Activated T-helper 1 cell treated with anti-CD3 and anti-CD28 coated beads, Interleukin-12 subunit alpha, Interleukin-12 subunit beta, Interleukin-2, Interleukin-4 antibody, amounts not matched to agents 30 ng/mL and 10 ng/mL and 1 ng/mL, durations not matched to agents 14 hours and 24 hours and 36 hours (primary cell): ENCODE measurements at regions of chr16 and their contacts with region 1.

Region 1: DNA sequence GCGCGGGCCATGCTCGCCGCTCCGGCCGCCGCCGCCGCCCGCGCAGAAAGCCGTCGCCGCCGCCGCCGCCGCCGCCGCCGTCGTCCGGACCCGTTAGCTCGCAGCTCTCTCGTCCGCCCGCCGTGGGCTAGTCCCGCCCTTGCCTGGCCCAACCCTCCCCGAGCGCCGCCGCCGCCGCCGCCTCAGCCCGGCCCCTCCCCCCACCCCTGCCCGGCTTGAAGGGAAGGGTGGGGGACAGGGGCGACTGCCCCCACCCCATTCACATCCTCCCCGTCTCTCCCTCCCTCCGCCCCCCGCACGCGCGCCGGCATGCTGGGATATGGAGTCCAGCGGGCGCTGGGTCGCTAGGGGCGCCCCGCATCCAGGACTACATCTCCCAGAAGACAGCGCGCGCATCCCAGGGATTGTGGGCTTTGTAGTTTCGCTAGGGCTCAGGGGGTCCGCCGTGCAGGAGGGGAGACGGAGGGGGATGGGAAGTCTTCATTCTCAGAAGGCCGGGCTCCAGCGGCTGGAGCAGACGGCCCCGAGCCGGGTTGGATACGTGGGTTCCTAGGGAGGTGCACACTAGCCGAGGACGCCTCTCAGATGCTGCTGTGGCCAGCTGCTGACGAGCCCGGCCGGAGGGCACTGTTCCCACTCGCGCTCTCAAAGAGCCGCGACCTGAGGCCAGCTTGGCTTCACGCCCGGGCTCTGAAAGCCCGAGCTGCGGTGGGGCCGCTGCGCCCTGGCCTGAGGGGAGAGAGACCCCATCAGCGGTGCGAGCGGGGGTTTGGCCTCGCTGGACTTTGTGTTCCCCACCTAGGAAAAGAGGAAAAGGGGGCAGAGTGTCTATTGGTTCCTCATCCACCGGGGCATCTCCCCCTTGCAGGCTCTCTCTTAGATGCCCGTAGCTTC is at the start of gene ST3GAL2:
- DNase-seq: peak; percentile 92
- H3K4me3 Mint-ChIP-seq: peak within 1 kb of the TSS; percentile 98
- H3K27ac Mint-ChIP-seq: peak within 1 kb of the TSS; percentile 92
- H3K4me1 Mint-ChIP-seq: peaks cover 28% of the 10 kb centered on the region
- H3K27me3 Mint-ChIP-seq: no peaks in the 10 kb centered on the region
- total RNA-seq, gene ST3GAL2: 35.6 and 37.7 TPM in 2 replicates

Region 2: GRCh38 chr16:70251629-70252354 is 187.4 kb before region 1 on chr16 and contains the start of gene EXOSC6:
- intact Hi-C with region 1: loop called (anchors 5 kb)
- DNase-seq: peak; percentile 90
- H3K4me3 Mint-ChIP-seq: peak within 1 kb of the TSS; percentile 91
- H3K27ac Mint-ChIP-seq: peak within 1 kb of the TSS; percentile 96
- H3K4me1 Mint-ChIP-seq: peaks cover 10% of the 10 kb centered on the region
- H3K27me3 Mint-ChIP-seq: no peaks in the 10 kb centered on the region
- total RNA-seq, gene EXOSC6: 40.5 and 42.1 TPM in 2 replicates

Region 3: DNA sequence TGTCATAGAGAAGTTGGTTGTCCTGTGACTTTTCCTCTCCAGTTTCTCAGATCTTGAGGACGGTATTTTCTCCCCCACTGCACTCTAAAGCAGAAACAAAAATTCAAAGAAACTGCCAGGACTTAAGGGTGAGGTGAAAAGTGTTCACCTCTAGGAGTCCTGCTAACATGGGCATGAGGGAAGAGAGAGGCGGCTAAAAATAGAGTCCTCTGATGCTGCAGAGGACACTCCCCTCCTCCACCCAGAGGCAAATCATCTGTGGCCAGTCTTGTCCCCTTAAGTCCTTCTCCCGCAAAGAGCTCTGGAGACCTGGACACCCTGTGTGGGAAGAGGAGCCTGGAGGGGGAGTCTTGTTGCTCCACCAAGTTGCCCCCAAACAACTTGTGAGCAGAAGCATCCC is 97.2 kb before region 1 on chr16:
- intact Hi-C with region 1: loop called (anchors 1 kb)
- DNase-seq: no peak
- H3K4me3 Mint-ChIP-seq: no peak overlapping the region
- H3K27ac Mint-ChIP-seq: no peak overlapping the region
- H3K4me1 Mint-ChIP-seq: peaks cover 5% of the 10 kb centered on the region
- H3K27me3 Mint-ChIP-seq: no peaks in the 10 kb centered on the region

Region 4: GRCh38 chr16:70428178-70428998 is 10.8 kb before region 1 on chr16:
- intact Hi-C with region 1: loop called (anchors 1 kb)
- DNase-seq: peak; percentile 57
- H3K4me3 Mint-ChIP-seq: peak overlapping the region; percentile 46
- H3K27ac Mint-ChIP-seq: peak overlapping the region; percentile 86
- H3K4me1 Mint-ChIP-seq: peaks cover 51% of the 10 kb centered on the region
- H3K27me3 Mint-ChIP-seq: no peaks in the 10 kb centered on the region

Region 5: DNA sequence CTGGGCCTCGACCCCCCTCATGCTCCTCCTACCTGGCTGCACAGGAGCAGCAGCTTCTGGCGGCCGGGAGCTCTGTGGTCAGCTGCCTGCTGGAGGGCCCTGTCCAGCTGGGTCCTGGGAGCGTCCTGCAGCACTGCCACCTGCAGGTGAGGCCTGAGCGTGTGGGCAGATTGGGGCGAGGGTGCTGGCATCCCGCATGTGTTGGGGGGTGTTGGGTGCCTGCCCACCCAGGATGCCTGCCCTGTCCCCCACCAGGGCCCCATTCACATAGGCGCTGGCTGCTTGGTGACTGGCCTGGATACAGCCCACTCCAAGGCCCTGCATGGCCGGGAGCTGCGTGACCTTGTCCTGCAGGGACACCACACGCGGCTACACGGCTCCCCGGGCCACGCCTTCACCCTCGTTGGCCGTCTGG is 31.7 kb after region 1 on chr16:
- intact Hi-C with region 1: loop called (anchors 1 kb)
- DNase-seq: no peak
- H3K4me3 Mint-ChIP-seq: no peak overlapping the region
- H3K27ac Mint-ChIP-seq: no peak overlapping the region
- H3K4me1 Mint-ChIP-seq: no peaks in the 10 kb centered on the region
- H3K27me3 Mint-ChIP-seq: no peaks in the 10 kb centered on the region